Prostate gland (tissue), 2 donors: ENCODE measurements at regions of chr17 and their contacts with region 1.

Region 1: DNA sequence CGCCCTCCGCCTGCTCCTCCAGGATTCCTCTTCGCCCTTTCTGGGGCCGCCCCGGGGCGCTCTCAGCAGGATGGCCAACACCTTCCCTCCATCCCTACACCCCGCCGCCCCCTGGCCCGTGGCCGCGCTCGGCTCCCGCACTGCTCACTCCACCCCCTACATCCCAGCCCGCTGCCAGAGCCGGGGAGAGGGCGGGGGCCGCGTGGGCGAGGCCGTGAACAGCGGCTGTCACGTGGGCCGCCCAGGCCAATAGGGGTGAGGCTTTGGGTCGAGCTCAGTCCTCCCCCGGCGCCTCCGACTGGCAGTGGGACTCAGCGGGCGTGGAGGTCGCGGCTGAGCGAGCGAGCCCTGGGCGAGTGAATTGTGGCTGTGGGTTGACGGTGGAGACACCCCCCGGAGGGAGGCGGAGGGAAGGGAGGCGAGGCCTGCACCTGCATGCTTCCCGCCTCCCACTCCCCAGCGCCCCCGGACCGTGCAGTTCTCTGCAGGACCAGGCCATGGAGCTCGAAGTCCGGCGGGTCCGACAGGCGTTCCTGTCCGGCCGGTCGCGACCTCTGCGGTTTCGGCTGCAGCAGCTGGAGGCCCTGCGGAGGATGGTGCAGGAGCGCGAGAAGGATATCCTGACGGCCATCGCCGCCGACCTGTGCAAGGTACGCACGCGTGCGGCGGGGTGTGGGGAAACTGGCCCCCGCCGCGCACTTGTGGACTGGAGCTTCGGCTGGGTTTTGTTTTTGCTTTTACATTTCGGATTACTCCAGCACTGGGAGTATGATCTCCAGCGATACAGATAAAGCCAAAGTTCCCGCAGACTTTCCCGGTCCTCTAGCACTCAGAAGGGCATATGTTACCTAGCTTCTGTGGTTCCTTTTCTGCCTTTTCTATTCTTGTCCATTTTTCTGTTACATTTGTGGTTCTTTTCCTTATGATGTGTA is at the start of gene ALDH3A2:
- DNase-seq: peak; percentile 98
- H3K4me3 ChIP-seq: peak within 1 kb of the TSS; percentile 69 to 71
- H3K27ac ChIP-seq: peak within 1 kb of the TSS; percentile 95 to 97
- H3K4me1 ChIP-seq: peaks cover 20% of the 10 kb centered on the region
- H3K27me3 ChIP-seq: no peaks in the 10 kb centered on the region
- CTCF ChIP-seq: peak in 1 of 4 experiments; percentile 18
- POLR2A ChIP-seq: peak; percentile 96
- total RNA-seq, gene ALDH3A2: 202 to 357 TPM

Region 2: DNA sequence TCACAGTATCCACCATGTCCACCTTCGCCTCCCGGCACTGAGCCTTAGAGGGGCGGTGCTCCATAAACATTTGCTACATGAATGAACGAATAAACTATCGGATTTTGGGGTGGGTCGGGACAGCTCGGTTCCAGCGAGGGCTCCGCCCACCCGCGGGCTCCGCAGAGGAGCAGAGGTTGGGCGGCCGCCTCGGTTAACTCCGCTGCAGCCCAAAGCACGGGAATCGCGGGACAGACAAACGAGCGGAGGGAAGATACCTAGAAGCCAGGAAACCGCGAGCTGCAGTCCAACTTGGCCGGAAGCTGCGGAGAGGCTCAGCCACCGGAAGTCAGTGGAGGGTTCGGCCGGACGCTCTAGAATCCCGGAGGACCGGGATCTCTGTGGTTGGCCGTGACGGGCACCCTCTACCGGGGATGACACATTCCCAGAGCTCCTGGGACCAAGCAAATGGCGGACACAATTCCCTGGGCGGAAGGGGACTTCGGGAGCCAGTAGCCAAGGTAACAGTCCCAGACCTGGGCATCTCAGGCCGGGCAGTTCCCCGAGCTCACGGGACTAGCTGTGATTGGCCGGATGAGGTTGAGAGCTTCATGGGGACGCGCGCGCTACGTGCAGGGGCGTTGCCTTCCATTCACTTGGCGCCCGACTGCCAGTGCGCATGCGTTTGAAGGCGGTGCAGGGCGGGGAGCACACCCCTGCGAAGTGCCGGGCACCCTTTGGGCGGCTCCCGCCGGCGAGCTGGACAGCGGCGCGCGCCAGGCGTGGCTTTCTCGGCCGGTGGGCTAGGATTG is 270.9 kb before region 1 on chr17:
- intact Hi-C with region 1: loop called (anchors 5 kb)
- DNase-seq: peak; percentile 98
- H3K4me3 ChIP-seq: peak overlapping the region; percentile 64 to 68
- H3K27ac ChIP-seq: peak overlapping the region; percentile 90
- H3K4me1 ChIP-seq: peaks cover 12% of the 10 kb centered on the region
- H3K27me3 ChIP-seq: no peaks in the 10 kb centered on the region
- CTCF ChIP-seq: peak in 1 of 4 experiments; percentile 19
- POLR2A ChIP-seq: peak; percentile 56

Region 3: DNA sequence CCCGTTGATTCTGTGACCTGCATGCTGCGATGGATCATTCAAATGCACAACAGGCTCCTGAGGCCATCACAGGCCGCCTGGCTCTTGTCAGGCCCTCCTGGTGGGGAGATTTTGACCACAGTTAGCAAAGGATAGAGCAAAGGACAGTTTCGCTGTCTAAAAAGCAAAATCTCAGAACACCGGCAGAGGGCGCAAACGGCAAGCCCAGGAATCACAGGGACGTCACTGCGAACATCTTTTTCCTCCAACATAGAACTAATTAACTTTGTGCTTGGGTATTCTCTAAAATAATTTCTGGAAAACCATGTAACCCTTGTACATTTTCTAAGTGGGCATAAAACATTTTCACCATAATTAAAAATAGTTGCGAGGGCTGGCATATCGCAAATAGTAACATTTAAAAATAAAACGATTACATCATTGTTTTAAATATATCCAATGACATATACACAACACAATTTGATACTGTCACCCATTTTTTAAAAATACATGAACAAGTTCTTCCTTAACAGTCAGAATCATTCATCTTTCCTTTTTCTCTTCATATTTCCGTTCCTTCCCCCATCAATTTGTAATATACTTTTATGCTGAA is 134.7 kb before region 1 on chr17:
- intact Hi-C with region 1: loop called (anchors 5 kb)
- DNase-seq: peak; percentile 49
- H3K4me3 ChIP-seq: no peak overlapping the region
- H3K27ac ChIP-seq: no peak overlapping the region
- H3K4me1 ChIP-seq: no peaks in the 10 kb centered on the region
- H3K27me3 ChIP-seq: no peaks in the 10 kb centered on the region
- CTCF ChIP-seq: peak; percentile 84 to 90 (median 89)
- POLR2A ChIP-seq: no peak

Region 4: GRCh38 chr17:19728079-19728495 is 79.3 kb after region 1 on chr17:
- intact Hi-C with region 1: loop called (anchors 5 kb)
- DNase-seq: peak; percentile 88
- H3K4me3 ChIP-seq: no peak overlapping the region
- H3K27ac ChIP-seq: peak overlapping the region; percentile 77 to 84
- H3K4me1 ChIP-seq: no peaks in the 10 kb centered on the region
- H3K27me3 ChIP-seq: no peaks in the 10 kb centered on the region
- CTCF ChIP-seq: no peak
- POLR2A ChIP-seq: no peak

Region 5: GRCh38 chr17:19766422-19767270 is 117.9 kb after region 1 on chr17:
- intact Hi-C with region 1: loop called (anchors 5 kb)
- DNase-seq: peak; percentile 61
- H3K4me3 ChIP-seq: no peak overlapping the region
- H3K27ac ChIP-seq: no peak overlapping the region
- H3K4me1 ChIP-seq: no peaks in the 10 kb centered on the region
- H3K27me3 ChIP-seq: no peaks in the 10 kb centered on the region
- CTCF ChIP-seq: peak; percentile 73 to 95 (median 91)
- POLR2A ChIP-seq: no peak